CD14-positive monocyte (primary cell): ENCODE measurements at regions of chrX and their contacts with region 1.

Region 1: DNA sequence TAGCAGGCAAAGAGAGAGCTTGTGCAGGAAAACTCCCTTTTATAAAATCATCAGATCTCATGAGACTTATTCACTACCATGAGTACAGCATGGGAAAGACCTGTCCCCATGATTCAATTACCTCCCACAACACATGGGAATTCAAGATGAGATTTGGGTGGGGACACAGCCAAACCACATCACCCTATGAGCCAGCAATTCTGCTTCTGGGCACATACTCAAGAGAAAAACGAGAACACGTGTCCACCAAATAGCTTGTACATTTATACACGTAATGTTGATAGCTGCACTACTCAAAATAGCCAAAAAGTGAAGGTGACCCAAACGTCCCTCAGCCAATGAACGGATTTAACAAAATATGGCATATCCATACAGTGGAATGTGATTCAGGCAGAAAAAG is 94.5 kb upstream of the DHRSX start:
- DNase-seq: no peak
- H3K4me3 ChIP-seq: no peak overlapping the region
- H3K4me3 Mint-ChIP-seq: no peak overlapping the region
- H3K27ac ChIP-seq: no peak overlapping the region
- H3K27ac Mint-ChIP-seq: no peak overlapping the region
- H3K4me1 ChIP-seq: no peaks in the 10 kb centered on the region
- H3K4me1 Mint-ChIP-seq: no peaks in the 10 kb centered on the region
- H3K27me3 ChIP-seq: no peaks in the 10 kb centered on the region
- H3K27me3 Mint-ChIP-seq: peaks cover 0 to 8% (median 2%) of the 10 kb centered on the region in 3 donors
- CTCF ChIP-seq: no peak

Region 2: DNA sequence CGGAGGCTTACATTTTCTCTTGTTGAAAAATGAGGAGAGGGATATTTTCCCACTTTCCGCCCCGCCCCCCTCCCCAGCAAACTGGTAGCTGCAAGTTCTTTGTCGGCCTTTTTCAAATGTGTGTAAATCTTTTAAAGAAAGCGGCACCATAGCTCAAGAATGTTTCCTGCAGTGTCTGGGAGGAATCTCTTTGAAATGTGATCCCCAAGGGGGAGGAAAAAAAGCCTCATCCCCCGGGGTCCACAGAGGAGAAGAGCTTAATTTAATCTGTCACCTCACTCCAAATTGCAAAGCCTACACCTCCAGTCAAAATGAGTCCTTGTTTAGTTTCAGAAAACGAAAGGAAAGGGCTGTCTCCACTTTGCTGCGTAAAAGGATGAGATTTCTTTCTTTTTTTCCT is 945.6 kb before region 1 on chrX:
- intact Hi-C with region 1: loop called (anchors 2 to 10 kb)
- DNase-seq: no peak
- H3K4me3 ChIP-seq: no peak overlapping the region
- H3K4me3 Mint-ChIP-seq: no peak overlapping the region
- H3K27ac ChIP-seq: no peak overlapping the region
- H3K27ac Mint-ChIP-seq: no peak overlapping the region
- H3K4me1 ChIP-seq: no peaks in the 10 kb centered on the region
- H3K4me1 Mint-ChIP-seq: peaks cover 7% of the 10 kb centered on the region
- H3K27me3 ChIP-seq: no peaks in the 10 kb centered on the region
- H3K27me3 Mint-ChIP-seq: peaks cover 8 to 17% (median 9%) of the 10 kb centered on the region in 3 donors
- CTCF ChIP-seq: no peak

Region 3: DNA sequence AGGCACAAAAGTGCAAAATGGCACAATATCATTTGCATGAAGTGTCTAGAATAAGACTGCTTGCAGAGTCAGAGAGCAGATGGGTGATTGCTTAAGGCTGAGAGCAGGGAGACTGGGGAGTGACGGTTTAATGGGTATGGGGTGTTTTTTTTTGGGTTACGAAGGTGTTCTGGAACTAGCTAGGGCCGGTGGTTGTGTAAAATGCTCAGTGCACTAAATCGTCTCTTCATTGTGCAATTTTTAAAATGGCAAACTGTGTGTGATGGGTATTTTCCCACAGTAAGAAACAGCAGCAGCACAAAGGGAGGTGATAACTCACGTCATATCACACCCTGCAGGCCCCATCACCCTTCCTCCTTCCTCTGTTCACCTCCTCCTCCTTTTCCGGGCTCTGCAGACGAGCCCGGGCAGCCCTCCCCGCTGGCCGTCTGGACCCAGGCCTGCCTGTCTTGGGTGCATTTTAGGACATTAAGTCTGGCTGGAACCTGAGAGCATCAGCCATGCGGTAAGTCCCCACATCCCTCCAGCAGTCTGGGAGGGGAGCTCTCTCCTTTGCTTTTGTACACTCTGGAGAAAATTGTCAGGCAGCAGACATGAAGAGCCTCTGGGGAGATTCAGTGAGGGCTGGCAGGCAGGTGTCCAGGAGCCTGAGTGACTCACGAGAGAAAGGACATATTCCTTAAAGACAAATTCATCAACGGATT is 937.7 kb before region 1 on chrX:
- intact Hi-C with region 1: loop called in 1 of 2 experiments (anchors 2 kb)
- DNase-seq: peak; percentile 33 to 72 (median 39)
- H3K4me3 ChIP-seq: no peak overlapping the region
- H3K4me3 Mint-ChIP-seq: peak overlapping the region; percentile 59 to 72
- H3K27ac ChIP-seq: peak overlapping the region; percentile 36 to 46
- H3K27ac Mint-ChIP-seq: peak overlapping the region in 6 of 7 donors; percentile 38 to 84 (median 68)
- H3K4me1 ChIP-seq: peaks cover 20 to 31% of the 10 kb centered on the region in 2 donors
- H3K4me1 Mint-ChIP-seq: peaks cover 19% of the 10 kb centered on the region
- H3K27me3 ChIP-seq: no peaks in the 10 kb centered on the region
- H3K27me3 Mint-ChIP-seq: no peaks in the 10 kb centered on the region
- CTCF ChIP-seq: no peak

Region 4: GRCh38 chrX:1673337-1673736 is 921.9 kb before region 1 on chrX:
- intact Hi-C with region 1: loop called in 1 of 2 experiments (anchors 10 kb)
- DNase-seq: peak; percentile 16 to 40 (median 30)
- H3K4me3 ChIP-seq: no peak overlapping the region
- H3K4me3 Mint-ChIP-seq: no peak overlapping the region
- H3K27ac ChIP-seq: no peak overlapping the region
- H3K27ac Mint-ChIP-seq: no peak overlapping the region
- H3K4me1 ChIP-seq: no peaks in the 10 kb centered on the region
- H3K4me1 Mint-ChIP-seq: no peaks in the 10 kb centered on the region
- H3K27me3 ChIP-seq: no peaks in the 10 kb centered on the region
- H3K27me3 Mint-ChIP-seq: peaks cover 0 to 3% (median 2%) of the 10 kb centered on the region in 3 donors
- CTCF ChIP-seq: peak; percentile 87

Region 5: GRCh38 chrX:2608638-2609430 is 13.6 kb after region 1 on chrX:
- intact Hi-C with region 1: no loop called
- DNase-seq: peak; percentile 75 to 83 (median 75)
- H3K4me3 ChIP-seq: peak overlapping the region; percentile 88 to 90 (median 89)
- H3K4me3 Mint-ChIP-seq: peak overlapping the region; percentile 96
- H3K27ac ChIP-seq: peak overlapping the region; percentile 84 to 93
- H3K27ac Mint-ChIP-seq: peak overlapping the region; percentile 87 to 96 (median 93)
- H3K4me1 ChIP-seq: peaks cover 28 to 33% of the 10 kb centered on the region in 2 donors
- H3K4me1 Mint-ChIP-seq: peaks cover 52% of the 10 kb centered on the region
- H3K27me3 ChIP-seq: no peaks in the 10 kb centered on the region
- H3K27me3 Mint-ChIP-seq: peaks cover 0 to 3% (median 0%) of the 10 kb centered on the region in 3 donors
- CTCF ChIP-seq: no peak